Mammary epithelial cell (primary cell): ENCODE measurements at regions of chr2 and their contacts with region 1.

Region 1: GRCh38 chr2:240499309-240500301 is 58.2 kb downstream of the ANKMY1 start:
- DNase-seq: no peak
- H3K4me3 ChIP-seq: no peak overlapping the region
- H3K27ac ChIP-seq: no peak overlapping the region
- H3K4me1 ChIP-seq: no peaks in the 10 kb centered on the region
- H3K27me3 ChIP-seq: no peaks in the 10 kb centered on the region
- CTCF ChIP-seq: no peak

Region 2: GRCh38 chr2:240060977-240061591 is 438.5 kb before region 1 on chr2:
- CTCF ChIA-PET with region 1: no interaction called
- dilution Hi-C with region 1: no loop called
- in situ Hi-C with region 1: no loop called
- intact Hi-C with region 1: loop called (anchors 10 kb)
- DNase-seq: peak; percentile 45
- H3K4me3 ChIP-seq: no peak overlapping the region
- H3K27ac ChIP-seq: no peak overlapping the region
- H3K4me1 ChIP-seq: no peaks in the 10 kb centered on the region
- H3K27me3 ChIP-seq: peaks cover 6% of the 10 kb centered on the region
- CTCF ChIP-seq: peak; percentile 37 to 74

Region 3: DNA sequence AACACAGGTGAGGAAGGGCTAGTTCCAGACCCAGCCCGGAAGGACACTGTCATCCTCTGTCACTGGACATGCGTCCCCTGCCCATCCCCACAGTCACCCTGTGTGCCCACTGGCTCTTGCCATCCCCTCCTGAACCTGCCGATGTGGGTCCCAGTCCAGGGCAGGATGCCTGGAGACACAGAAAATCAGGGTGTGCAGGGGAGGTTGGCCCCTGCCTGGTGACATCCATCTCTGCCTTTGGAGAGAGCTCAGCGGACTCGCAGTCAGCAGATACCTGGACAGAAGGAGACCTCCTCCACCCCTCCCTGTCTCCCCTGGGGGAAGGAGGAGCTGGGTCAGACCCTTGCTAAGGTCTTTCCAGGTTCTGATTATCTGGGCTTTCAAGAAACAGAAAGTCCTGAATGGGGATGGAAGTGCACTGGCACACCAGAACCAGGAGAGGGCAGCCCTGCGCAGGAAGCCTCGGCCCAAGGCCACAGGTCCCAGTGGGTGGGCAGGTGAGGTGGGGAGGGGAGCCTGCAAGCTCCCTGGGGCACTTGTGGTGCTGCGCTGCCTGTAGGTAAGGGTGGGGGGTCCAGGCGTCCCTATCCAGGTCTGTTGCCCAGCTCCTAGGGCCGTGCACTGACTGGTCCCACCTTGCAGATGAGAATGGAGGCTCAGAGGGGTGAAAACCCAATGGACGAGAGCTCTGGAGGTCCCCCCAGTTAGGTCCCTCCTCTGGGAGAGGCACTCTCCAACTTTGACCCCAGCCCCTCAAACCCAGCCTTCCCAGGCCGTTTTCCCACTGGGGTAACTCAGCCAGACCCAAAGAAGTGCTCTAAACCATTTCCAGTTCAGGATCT is 349.4 kb before region 1 on chr2:
- CTCF ChIA-PET with region 1: no interaction called
- dilution Hi-C with region 1: no loop called
- in situ Hi-C with region 1: no loop called
- intact Hi-C with region 1: loop called (anchors 1 kb)
- DNase-seq: no peak
- H3K4me3 ChIP-seq: no peak overlapping the region
- H3K27ac ChIP-seq: no peak overlapping the region
- H3K4me1 ChIP-seq: no peaks in the 10 kb centered on the region
- H3K27me3 ChIP-seq: peaks cover 3% of the 10 kb centered on the region
- CTCF ChIP-seq: peak; percentile 80 to 94

Region 4: GRCh38 chr2:240412211-240412861 is 87.3 kb before region 1 on chr2:
- CTCF ChIA-PET with region 1: no interaction called
- dilution Hi-C with region 1: no loop called
- in situ Hi-C with region 1: no loop called
- intact Hi-C with region 1: no loop called
- DNase-seq: no peak
- H3K4me3 ChIP-seq: no peak overlapping the region
- H3K27ac ChIP-seq: no peak overlapping the region
- H3K4me1 ChIP-seq: no peaks in the 10 kb centered on the region
- H3K27me3 ChIP-seq: no peaks in the 10 kb centered on the region
- CTCF ChIP-seq: no peak

Region 5: DNA sequence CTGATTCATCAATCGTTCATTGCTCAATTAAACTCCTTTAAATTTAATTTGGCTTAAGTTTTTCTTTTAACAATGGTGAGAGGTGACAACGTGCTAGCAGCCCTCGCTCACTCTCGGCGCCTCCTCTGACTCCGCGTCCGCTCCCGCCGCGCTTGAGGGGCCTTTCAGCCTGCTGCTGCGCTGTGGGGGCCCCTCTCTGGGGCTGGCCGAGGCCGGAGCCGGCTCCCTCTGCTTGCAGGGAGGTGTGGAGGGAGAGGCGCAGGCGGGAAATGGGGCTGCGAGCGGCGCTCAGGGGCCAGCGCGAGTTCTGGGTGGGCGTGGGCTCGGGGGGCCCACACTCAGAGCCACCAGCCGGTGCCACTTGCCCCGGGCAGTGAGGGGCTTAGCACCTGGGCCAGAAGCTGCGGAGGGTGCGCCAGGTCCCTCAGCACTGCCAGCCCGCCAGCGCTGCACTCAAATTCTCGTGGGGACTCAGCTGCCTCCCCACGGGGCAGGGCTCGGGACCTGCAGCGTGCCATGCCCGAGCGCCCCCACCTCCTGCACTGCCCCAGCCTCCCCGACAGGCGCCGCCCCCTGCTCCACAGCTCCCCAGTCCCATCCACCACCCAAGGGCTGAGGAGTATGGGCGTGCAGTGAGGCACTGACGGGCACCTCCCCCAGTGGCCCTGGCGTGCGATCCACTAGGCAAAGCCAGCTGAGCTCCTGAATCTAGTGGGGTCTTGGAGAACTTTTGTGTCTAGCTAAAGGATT is 38.6 kb after region 1 on chr2:
- CTCF ChIA-PET with region 1: no interaction called
- dilution Hi-C with region 1: no loop called
- in situ Hi-C with region 1: no loop called
- intact Hi-C with region 1: no loop called
- DNase-seq: no peak
- H3K4me3 ChIP-seq: no peak overlapping the region
- H3K27ac ChIP-seq: no peak overlapping the region
- H3K4me1 ChIP-seq: no peaks in the 10 kb centered on the region
- H3K27me3 ChIP-seq: no peaks in the 10 kb centered on the region
- CTCF ChIP-seq: no peak

Region 6: DNA sequence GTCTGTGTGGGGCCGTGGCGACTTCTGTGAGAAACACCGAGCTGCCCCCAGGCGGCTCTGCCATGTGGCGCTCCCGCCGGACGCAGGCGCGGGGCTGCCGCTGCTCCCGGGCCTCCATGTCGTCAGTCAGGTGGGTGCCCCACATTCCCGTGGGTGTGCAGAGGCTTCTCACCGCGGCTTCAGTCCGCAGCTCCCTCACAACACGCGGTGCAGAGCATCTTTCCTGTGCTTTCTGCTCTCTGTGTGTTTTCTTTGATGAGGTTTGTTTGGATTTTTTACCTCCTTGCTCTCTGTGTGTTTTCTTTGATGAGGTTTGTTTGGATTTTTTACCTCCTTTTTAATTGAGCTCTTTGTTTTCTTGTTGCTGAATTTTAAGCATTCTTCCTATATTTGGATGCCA is 205.0 kb after region 1 on chr2:
- CTCF ChIA-PET with region 1: no interaction called
- dilution Hi-C with region 1: no loop called
- in situ Hi-C with region 1: loop called in 1 of 2 experiments (anchors 10 kb)
- intact Hi-C with region 1: no loop called
- DNase-seq: no peak
- H3K4me3 ChIP-seq: no peak overlapping the region
- H3K27ac ChIP-seq: no peak overlapping the region
- H3K4me1 ChIP-seq: no peaks in the 10 kb centered on the region
- H3K27me3 ChIP-seq: peaks cover 28% of the 10 kb centered on the region
- CTCF ChIP-seq: no peak